Naive thymus-derived CD4-positive, alpha-beta T cell (primary cell): ENCODE measurements at regions of chrX and their contacts with region 1.

Region 1: DNA sequence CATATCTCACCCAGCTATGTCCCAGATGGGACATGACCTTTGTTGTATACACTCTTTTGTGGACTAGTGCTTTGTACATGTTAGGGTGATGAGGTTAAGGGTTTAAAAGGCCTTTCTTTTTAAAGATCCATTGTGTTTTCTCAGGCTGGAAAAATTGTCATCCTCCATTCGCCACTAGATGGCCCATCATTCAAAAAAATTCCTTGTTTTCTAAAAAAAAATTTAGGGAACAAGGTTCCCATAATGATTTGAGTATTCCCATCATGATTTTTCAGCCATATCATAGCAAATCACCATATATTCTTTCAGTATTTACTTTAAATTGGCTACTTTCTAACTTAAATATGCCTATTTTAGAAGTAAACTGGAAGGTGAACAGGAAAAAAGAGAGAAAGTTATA is 91.9 kb upstream of the TMEM164 start:
- DNase-seq: no peak
- ATAC-seq: no peak
- H3K4me3 ChIP-seq: no peak overlapping the region
- H3K4me3 Mint-ChIP-seq: no peak overlapping the region
- H3K27ac ChIP-seq: no peak overlapping the region
- H3K27ac Mint-ChIP-seq: no peak overlapping the region
- H3K4me1 ChIP-seq: no peaks in the 10 kb centered on the region
- H3K4me1 Mint-ChIP-seq: no peaks in the 10 kb centered on the region
- H3K27me3 ChIP-seq: no peaks in the 10 kb centered on the region
- H3K27me3 Mint-ChIP-seq: peaks cover 0 to 9% (median 0%) of the 10 kb centered on the region in 5 donors

Region 2: GRCh38 chrX:109155161-109155560 is 755.9 kb before region 1 on chrX:
- CTCF ChIA-PET with region 1: no interaction called
- POLR2A ChIA-PET with region 1: no interaction called
- intact Hi-C with region 1: no loop called
- DNase-seq: no peak
- ATAC-seq: no peak
- H3K4me3 ChIP-seq: no peak overlapping the region
- H3K4me3 Mint-ChIP-seq: no peak overlapping the region
- H3K27ac ChIP-seq: no peak overlapping the region
- H3K27ac Mint-ChIP-seq: no peak overlapping the region
- H3K4me1 ChIP-seq: no peaks in the 10 kb centered on the region
- H3K4me1 Mint-ChIP-seq: no peaks in the 10 kb centered on the region
- H3K27me3 ChIP-seq: no peaks in the 10 kb centered on the region
- H3K27me3 Mint-ChIP-seq: no peaks in the 10 kb centered on the region

Region 3: DNA sequence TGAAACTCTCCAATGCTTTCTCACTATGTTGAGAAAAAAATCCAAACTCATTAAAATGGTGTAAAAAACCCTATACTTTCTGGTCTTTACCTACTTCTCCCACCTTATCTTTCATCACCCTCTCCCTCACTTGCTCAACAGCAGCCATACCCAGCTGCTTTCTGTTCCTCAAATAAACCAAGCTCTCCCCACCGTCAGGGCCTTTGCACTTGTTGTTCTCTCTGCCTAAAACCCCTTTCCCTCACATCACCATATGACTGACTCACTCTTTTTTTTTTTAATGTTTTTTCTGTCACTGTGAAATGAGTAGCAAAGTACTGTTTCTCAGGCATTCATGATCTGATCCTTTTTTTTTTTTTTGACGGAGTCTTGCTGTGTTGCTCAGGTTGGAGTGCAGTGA is 30.4 kb before region 1 on chrX:
- CTCF ChIA-PET with region 1: no interaction called
- POLR2A ChIA-PET with region 1: no interaction called
- intact Hi-C with region 1: no loop called
- DNase-seq: no peak
- ATAC-seq: peak; percentile 59
- H3K4me3 ChIP-seq: no peak overlapping the region
- H3K4me3 Mint-ChIP-seq: no peak overlapping the region
- H3K27ac ChIP-seq: no peak overlapping the region
- H3K27ac Mint-ChIP-seq: no peak overlapping the region
- H3K4me1 ChIP-seq: no peaks in the 10 kb centered on the region
- H3K4me1 Mint-ChIP-seq: peaks cover 0 to 2% (median 0%) of the 10 kb centered on the region in 7 donors
- H3K27me3 ChIP-seq: no peaks in the 10 kb centered on the region
- H3K27me3 Mint-ChIP-seq: peaks cover 0 to 10% (median 0%) of the 10 kb centered on the region in 5 donors

Region 4: GRCh38 chrX:110412971-110413721 is 502.1 kb after region 1 on chrX:
- CTCF ChIA-PET with region 1: no interaction called
- POLR2A ChIA-PET with region 1: no interaction called
- intact Hi-C with region 1: loop called in 1 of 2 experiments (anchors 5 kb)
- DNase-seq: peak; percentile 25 to 66 (median 56)
- ATAC-seq: peak; percentile 91
- H3K4me3 ChIP-seq: no peak overlapping the region
- H3K4me3 Mint-ChIP-seq: no peak overlapping the region
- H3K27ac ChIP-seq: no peak overlapping the region
- H3K27ac Mint-ChIP-seq: peak overlapping the region in 1 of 9 donors; percentile 16
- H3K4me1 ChIP-seq: no peaks in the 10 kb centered on the region
- H3K4me1 Mint-ChIP-seq: peaks cover 0 to 6% (median 0%) of the 10 kb centered on the region in 7 donors
- H3K27me3 ChIP-seq: no peaks in the 10 kb centered on the region
- H3K27me3 Mint-ChIP-seq: peaks cover 0 to 4% (median 0%) of the 10 kb centered on the region in 5 donors